Sigmoid colon (tissue), 7 donors: ENCODE measurements at regions of chr4 and their contacts with region 1.

Region 1: GRCh38 chr4:75995727-75996126 is 5.0 kb upstream of the SDAD1 start:
- DNase-seq: no peak
- H3K4me3 ChIP-seq: no peak overlapping the region
- H3K27ac ChIP-seq: no peak overlapping the region
- H3K4me1 ChIP-seq: peaks cover 0 to 5% (median 2%) of the 10 kb centered on the region in 4 donors
- H3K27me3 ChIP-seq: no peaks in the 10 kb centered on the region
- CTCF ChIP-seq: peak; percentile 13 to 68 (median 54)
- EP300 ChIP-seq: no peak
- POLR2A ChIP-seq: no peak

Region 2: GRCh38 chr4:76067652-76068286 is 72.0 kb after region 1 on chr4:
- intact Hi-C with region 1: loop called (anchors 1 kb)
- DNase-seq: peak; percentile 75
- H3K4me3 ChIP-seq: no peak overlapping the region
- H3K27ac ChIP-seq: no peak overlapping the region
- H3K4me1 ChIP-seq: peaks cover 0 to 4% (median 0%) of the 10 kb centered on the region in 4 donors
- H3K27me3 ChIP-seq: no peaks in the 10 kb centered on the region
- CTCF ChIP-seq: peak; percentile 46 to 77 (median 60)
- EP300 ChIP-seq: no peak
- POLR2A ChIP-seq: no peak

Region 3: DNA sequence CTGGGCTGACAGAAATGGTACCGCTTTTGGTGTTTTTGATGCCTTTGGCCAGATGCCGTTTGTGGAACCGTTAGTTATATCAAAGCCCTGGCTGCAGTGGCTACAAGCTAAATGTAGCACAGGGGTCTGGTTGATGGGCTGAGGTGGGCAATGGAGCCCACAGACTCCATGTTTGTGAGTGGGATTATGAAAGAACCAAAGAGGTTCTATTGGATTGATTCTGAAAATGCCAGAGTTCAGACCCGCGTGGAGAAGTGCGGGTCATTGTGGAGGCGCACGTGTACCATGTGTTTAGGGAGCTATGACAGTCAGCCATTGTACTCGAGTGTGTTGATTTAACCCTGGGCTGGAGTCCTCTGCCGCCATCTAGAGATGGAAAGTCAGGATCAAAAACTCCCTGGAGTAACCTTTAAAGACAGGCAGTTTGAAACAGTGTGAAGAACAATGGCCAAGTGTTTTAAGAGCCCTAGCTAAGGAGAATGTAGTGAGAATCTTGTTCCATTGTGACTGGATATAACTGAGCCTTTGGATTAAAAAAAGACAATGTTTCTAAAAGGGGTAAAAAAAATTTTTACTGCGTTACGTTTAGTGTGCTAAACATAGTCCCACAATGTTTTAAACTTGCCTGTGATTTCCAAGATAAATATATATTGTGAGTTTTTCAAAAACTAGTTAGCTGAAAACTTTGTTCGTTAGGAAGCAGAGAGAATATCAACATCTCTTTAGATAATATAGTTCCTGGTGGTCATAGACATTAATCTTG is 91.5 kb after region 1 on chr4:
- intact Hi-C with region 1: loop called (anchors 1 kb)
- DNase-seq: no peak
- H3K4me3 ChIP-seq: peak overlapping the region in 1 of 4 donors; percentile 9
- H3K27ac ChIP-seq: no peak overlapping the region
- H3K4me1 ChIP-seq: peaks cover 0 to 5% (median 0%) of the 10 kb centered on the region in 4 donors
- H3K27me3 ChIP-seq: no peaks in the 10 kb centered on the region
- CTCF ChIP-seq: peak in 3 of 4 experiments; percentile 27 to 48 (median 45)
- EP300 ChIP-seq: no peak
- POLR2A ChIP-seq: no peak

Region 4: DNA sequence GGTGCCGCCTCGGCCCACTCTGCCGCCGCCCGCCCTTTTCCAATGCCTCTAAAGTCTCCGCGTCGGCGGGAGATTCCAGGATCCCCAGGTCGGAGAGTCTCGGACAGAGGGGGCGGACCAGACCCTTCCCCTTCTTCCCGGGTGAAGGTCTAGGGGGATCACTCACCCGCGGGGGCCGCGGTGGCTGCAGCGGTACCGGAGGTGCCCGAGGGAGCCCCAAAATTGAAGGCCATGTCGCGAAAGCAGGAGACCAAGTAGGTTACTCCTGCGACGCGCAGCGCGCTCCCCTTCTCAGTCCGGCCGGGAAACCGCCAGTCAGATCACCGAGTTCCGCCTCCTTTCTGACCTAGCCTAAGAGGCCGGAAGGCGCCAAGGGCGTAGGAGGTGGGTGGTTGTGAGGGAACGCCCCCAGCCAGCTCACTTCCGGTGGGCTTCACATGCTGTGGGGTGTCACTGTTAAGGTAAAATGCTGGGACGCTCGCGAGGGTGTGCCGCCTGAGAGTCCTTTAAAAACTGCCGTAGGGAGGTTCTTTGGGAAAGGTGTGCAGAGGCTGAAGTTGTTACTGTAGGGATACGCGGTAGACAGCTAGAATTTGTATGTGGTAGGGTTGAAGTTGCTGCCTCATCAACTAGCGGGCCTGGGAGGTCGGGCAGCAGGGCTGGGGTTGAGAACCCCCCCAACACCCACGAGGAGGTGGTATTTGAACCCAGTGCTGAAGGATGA is 152.6 kb after region 1 on chr4 and contains the start of gene NUP54:
- intact Hi-C with region 1: loop called (anchors 1 kb)
- DNase-seq: peak; percentile 96
- H3K4me3 ChIP-seq: peak within 1 kb of the TSS; percentile 70 to 94 (median 79)
- H3K27ac ChIP-seq: peak within 1 kb of the TSS; percentile 91 to 94 (median 92)
- H3K4me1 ChIP-seq: peaks cover 0 to 34% (median 32%) of the 10 kb centered on the region in 4 donors
- H3K27me3 ChIP-seq: no peaks in the 10 kb centered on the region
- CTCF ChIP-seq: no peak
- EP300 ChIP-seq: peak in 1 of 4 donors; percentile 22
- POLR2A ChIP-seq: peak; percentile 81 to 83
- total RNA-seq, gene NUP54: 38.0 to 57.9 (median 48.1) TPM